ENCODE measurements at regions of chr10 and their contacts with region 1.

Region 1: GRCh38 chr10:14564268-14564744 is 210.4 kb downstream of the FAM107B start:
- DNase-seq: peak in 6 of 9 donors; percentile 42 to 62 (median 58)
- ATAC-seq: peak; percentile 64
- H3K4me3 ChIP-seq: peak overlapping the region; percentile 51
- H3K4me3 Mint-ChIP-seq: peak overlapping the region; percentile 76 to 93 (median 86)
- H3K27ac ChIP-seq: peak overlapping the region; percentile 82
- H3K27ac Mint-ChIP-seq: peak overlapping the region; percentile 92 to 99 (median 96)
- H3K4me1 ChIP-seq: peaks cover 78 to 80% of the 10 kb centered on the region in 2 donors
- H3K4me1 Mint-ChIP-seq: peaks cover 84 to 100% (median 92%) of the 10 kb centered on the region in 7 donors
- H3K27me3 ChIP-seq: no peaks in the 10 kb centered on the region
- H3K27me3 Mint-ChIP-seq: no peaks in the 10 kb centered on the region

Region 2: DNA sequence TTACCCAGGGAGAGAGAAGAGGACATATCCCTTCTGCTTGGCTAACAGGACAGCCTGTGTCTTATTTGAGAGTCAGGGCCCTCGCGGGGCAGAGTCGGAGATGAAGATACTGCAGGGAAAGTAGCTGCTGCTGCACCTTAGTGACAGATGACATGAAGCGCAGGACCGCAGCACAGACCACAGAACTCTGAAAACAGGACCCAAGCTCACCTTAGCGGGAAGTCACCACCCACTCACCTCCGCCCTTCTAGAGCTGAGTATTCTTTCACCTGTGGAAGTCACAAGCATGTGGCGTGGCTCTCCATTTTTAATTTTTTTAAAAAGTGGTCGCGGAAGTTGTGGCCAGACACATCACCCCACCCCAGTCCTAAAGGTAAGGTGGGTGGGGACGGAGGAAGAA is 18.9 kb after region 1 on chr10:
- CTCF ChIA-PET with region 1: interaction called, 17 read pairs
- POLR2A ChIA-PET with region 1: interaction called, 429 read pairs
- intact Hi-C with region 1: loop called (anchors 1 kb)
- DNase-seq: peak; percentile 47 to 92 (median 87)
- ATAC-seq: peak; percentile 79
- H3K4me3 ChIP-seq: peak overlapping the region; percentile 10
- H3K4me3 Mint-ChIP-seq: peak overlapping the region; percentile 76 to 90 (median 82)
- H3K27ac ChIP-seq: peak overlapping the region; percentile 83
- H3K27ac Mint-ChIP-seq: peak overlapping the region; percentile 96 to 100 (median 99)
- H3K4me1 ChIP-seq: peaks cover 75 to 77% of the 10 kb centered on the region in 2 donors
- H3K4me1 Mint-ChIP-seq: peaks cover 69 to 99% (median 92%) of the 10 kb centered on the region in 7 donors
- H3K27me3 ChIP-seq: no peaks in the 10 kb centered on the region
- H3K27me3 Mint-ChIP-seq: no peaks in the 10 kb centered on the region

Region 3: GRCh38 chr10:14670551-14671240 is 106.4 kb after region 1 on chr10:
- CTCF ChIA-PET with region 1: no interaction called
- POLR2A ChIA-PET with region 1: no interaction called
- intact Hi-C with region 1: no loop called
- DNase-seq: no peak
- ATAC-seq: no peak
- H3K4me3 ChIP-seq: no peak overlapping the region
- H3K4me3 Mint-ChIP-seq: no peak overlapping the region
- H3K27ac ChIP-seq: no peak overlapping the region
- H3K27ac Mint-ChIP-seq: peak overlapping the region in 2 of 9 donors; percentile 32 to 42
- H3K4me1 ChIP-seq: no peaks in the 10 kb centered on the region
- H3K4me1 Mint-ChIP-seq: peaks cover 0 to 20% (median 10%) of the 10 kb centered on the region in 7 donors
- H3K27me3 ChIP-seq: no peaks in the 10 kb centered on the region
- H3K27me3 Mint-ChIP-seq: peaks cover 0 to 5% (median 0%) of the 10 kb centered on the region in 5 donors